Caco-2 (cell line): ENCODE measurements at regions of chr1 and their contacts with region 1.

Region 1: GRCh38 chr1:186680245-186681061 is at the start of gene PTGS2:
- DNase-seq: peak; percentile 93 to 95
- H3K4me3 ChIP-seq: peak within 1 kb of the TSS; percentile 59
- H3K4me3 Mint-ChIP-seq: peak within 1 kb of the TSS; percentile 99
- H3K27ac Mint-ChIP-seq: peak within 1 kb of the TSS; percentile 99
- H3K4me1 ChIP-seq: no peaks in the 10 kb centered on the region
- H3K4me1 Mint-ChIP-seq: peaks cover 10% of the 10 kb centered on the region
- H3K27me3 ChIP-seq: no peaks in the 10 kb centered on the region
- H3K27me3 Mint-ChIP-seq: no peaks in the 10 kb centered on the region
- CTCF ChIP-seq: peak; percentile 36 to 46
- total RNA-seq, gene PTGS2: 18.4 and 24.2 TPM in 2 replicates

Region 2: DNA sequence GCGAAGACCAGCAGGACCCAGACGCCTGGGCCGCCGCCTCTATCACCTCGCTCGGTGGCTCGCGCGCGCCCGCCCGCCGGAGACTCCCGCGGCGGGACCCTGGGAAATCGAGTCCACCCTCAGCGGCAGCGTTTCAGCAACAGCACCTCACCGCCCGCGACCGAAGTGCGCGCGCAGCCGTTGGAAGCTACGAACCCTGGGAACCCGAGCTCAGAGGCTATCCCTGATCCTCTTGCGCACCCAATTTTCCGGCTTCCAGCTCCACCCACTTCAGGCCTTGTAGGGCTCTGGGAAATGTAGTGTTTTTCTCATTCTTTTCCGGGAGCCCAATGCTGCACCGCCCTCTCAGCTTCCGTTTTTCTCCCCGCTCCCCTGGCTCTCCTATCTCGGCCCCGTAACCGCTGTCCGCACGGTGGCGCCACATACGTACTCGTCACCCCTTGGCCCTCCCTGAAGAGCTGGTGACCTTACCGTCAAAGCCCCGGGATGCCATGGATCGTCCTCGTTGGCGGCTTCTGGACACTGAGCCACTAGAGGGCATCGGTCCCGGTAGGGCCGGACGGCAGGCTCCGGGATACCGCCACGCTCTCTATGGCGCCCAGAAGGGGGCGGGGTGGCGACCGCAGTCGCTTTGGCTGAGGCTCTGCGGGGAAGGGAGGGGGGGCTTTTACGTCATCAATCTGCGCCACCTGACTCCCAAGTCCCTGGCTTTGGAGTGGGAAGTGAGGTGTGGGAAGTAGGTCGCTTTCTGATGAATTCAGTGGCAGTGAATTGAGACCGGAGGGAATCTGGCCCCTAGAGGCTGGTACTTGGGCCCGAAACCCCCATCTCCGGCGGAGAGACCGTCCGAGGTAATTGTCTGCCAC is 305.1 kb before region 1 on chr1 and contains the starts of genes ODR4 and TPR:
- CTCF ChIA-PET with region 1: interaction called, 9 read pairs
- POLR2A ChIA-PET with region 1: no interaction called
- intact Hi-C with region 1: loop called (anchors 1 kb)
- DNase-seq: peak; percentile 97 to 99
- H3K4me3 ChIP-seq: peak within 1 kb of the TSS; percentile 78
- H3K4me3 Mint-ChIP-seq: peak within 1 kb of the TSS; percentile 98
- H3K27ac Mint-ChIP-seq: peak within 1 kb of the TSS; percentile 100
- H3K4me1 ChIP-seq: no peaks in the 10 kb centered on the region
- H3K4me1 Mint-ChIP-seq: no peaks in the 10 kb centered on the region
- H3K27me3 ChIP-seq: no peaks in the 10 kb centered on the region
- H3K27me3 Mint-ChIP-seq: no peaks in the 10 kb centered on the region
- CTCF ChIP-seq: peak; percentile 86 to 90
- total RNA-seq, gene ODR4: 29.1 and 32.0 TPM in 2 replicates
- total RNA-seq, gene TPR: 172 and 178 TPM in 2 replicates

Region 3: GRCh38 chr1:186482661-186483255 is 197.7 kb before region 1 on chr1:
- CTCF ChIA-PET with region 1: interaction called, 9 read pairs
- POLR2A ChIA-PET with region 1: no interaction called
- intact Hi-C with region 1: loop called (anchors 1 kb)
- DNase-seq: peak; percentile 67 to 75
- H3K4me3 ChIP-seq: no peak overlapping the region
- H3K4me3 Mint-ChIP-seq: no peak overlapping the region
- H3K27ac Mint-ChIP-seq: no peak overlapping the region
- H3K4me1 ChIP-seq: peaks cover 53% of the 10 kb centered on the region
- H3K4me1 Mint-ChIP-seq: peaks cover 37% of the 10 kb centered on the region
- H3K27me3 ChIP-seq: no peaks in the 10 kb centered on the region
- H3K27me3 Mint-ChIP-seq: no peaks in the 10 kb centered on the region
- CTCF ChIP-seq: peak; percentile 88 to 94

Region 4: GRCh38 chr1:186605762-186606350 is 74.6 kb before region 1 on chr1:
- CTCF ChIA-PET with region 1: interaction called, 15 read pairs
- POLR2A ChIA-PET with region 1: no interaction called
- intact Hi-C with region 1: loop called (anchors 1 kb)
- DNase-seq: peak; percentile 70 to 72
- H3K4me3 ChIP-seq: no peak overlapping the region
- H3K4me3 Mint-ChIP-seq: no peak overlapping the region
- H3K27ac Mint-ChIP-seq: peak overlapping the region; percentile 43
- H3K4me1 ChIP-seq: peaks cover 16% of the 10 kb centered on the region
- H3K4me1 Mint-ChIP-seq: peaks cover 9% of the 10 kb centered on the region
- H3K27me3 ChIP-seq: no peaks in the 10 kb centered on the region
- H3K27me3 Mint-ChIP-seq: no peaks in the 10 kb centered on the region
- CTCF ChIP-seq: peak; percentile 70 to 71

Region 5: DNA sequence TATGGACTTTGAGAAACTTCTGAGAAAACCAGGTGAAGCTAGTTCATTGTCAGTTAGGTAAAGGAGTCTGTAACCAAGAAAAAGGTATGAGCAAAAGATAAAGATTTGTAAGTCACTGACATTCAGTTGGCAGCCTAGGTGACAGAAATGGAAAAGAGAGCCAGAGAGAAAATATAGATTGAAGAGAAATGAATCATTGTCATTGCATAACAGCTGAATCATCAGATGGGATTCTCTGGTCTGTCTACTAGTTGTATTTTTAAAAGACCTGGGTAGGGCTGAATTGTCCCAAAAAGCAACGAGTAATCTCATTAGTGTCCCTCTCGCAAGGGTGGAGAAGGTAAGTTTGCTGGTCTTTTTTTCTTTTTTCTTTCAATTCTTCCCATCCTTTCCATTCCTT is 36.9 kb before region 1 on chr1:
- CTCF ChIA-PET with region 1: interaction called, 4 read pairs
- POLR2A ChIA-PET with region 1: interaction called, 4 read pairs
- intact Hi-C with region 1: loop called (anchors 1 kb)
- DNase-seq: no peak
- H3K4me3 ChIP-seq: no peak overlapping the region
- H3K4me3 Mint-ChIP-seq: peak overlapping the region; percentile 6
- H3K27ac Mint-ChIP-seq: peak overlapping the region; percentile 93
- H3K4me1 ChIP-seq: peaks cover 30% of the 10 kb centered on the region
- H3K4me1 Mint-ChIP-seq: peaks cover 20% of the 10 kb centered on the region
- H3K27me3 ChIP-seq: no peaks in the 10 kb centered on the region
- H3K27me3 Mint-ChIP-seq: no peaks in the 10 kb centered on the region
- CTCF ChIP-seq: no peak

Region 6: GRCh38 chr1:186915555-186915954 is 235.1 kb after region 1 on chr1:
- CTCF ChIA-PET with region 1: interaction called, 6 read pairs
- POLR2A ChIA-PET with region 1: no interaction called
- intact Hi-C with region 1: loop called (anchors 10 kb)
- DNase-seq: no peak
- H3K4me3 ChIP-seq: no peak overlapping the region
- H3K4me3 Mint-ChIP-seq: no peak overlapping the region
- H3K27ac Mint-ChIP-seq: no peak overlapping the region
- H3K4me1 ChIP-seq: peaks cover 3% of the 10 kb centered on the region; the same call in 1 of the 2 replicates
- H3K4me1 Mint-ChIP-seq: no peaks in the 10 kb centered on the region
- H3K27me3 ChIP-seq: no peaks in the 10 kb centered on the region
- H3K27me3 Mint-ChIP-seq: no peaks in the 10 kb centered on the region
- CTCF ChIP-seq: no peak